ENCODE measurements at regions of chr3 and their contacts with region 1.

Region 1: DNA sequence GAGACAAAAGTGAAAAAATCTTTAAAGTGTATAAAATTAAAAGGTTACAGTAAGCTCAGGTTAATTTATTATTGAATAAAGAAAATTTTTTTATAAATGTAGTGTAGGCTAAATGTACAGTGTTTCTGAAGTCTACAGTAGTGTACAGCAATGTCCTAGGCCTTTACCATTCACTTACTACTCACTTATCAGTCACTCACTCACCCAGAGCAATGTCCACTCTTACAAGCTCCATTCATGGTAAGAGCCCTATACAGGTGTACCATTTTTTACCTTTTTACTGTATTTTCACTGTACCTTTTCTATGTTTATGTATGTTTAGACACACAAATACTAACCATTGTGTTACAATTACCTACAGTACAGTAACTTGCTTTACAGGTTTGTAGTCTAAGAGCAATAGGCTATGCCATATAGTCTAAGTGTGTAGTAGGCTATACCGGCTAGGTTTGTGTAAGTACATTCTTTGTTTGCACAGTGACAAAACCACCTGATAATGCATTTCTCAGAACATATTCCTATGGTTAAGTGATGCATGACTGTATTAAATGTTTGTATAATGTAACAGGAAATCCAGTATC is 38.1 kb upstream of the NECTIN3 start:
- H3K4me3 Mint-ChIP-seq: no peak overlapping the region
- H3K27ac Mint-ChIP-seq: no peak overlapping the region
- H3K4me1 Mint-ChIP-seq: no peaks in the 10 kb centered on the region
- H3K27me3 Mint-ChIP-seq: no peaks in the 10 kb centered on the region

Region 2: GRCh38 chr3:110362751-110363150 is 670.8 kb before region 1 on chr3:
- intact Hi-C with region 1: no loop called
- H3K4me3 Mint-ChIP-seq: no peak overlapping the region
- H3K27ac Mint-ChIP-seq: no peak overlapping the region
- H3K4me1 Mint-ChIP-seq: peaks cover 6% of the 10 kb centered on the region
- H3K27me3 Mint-ChIP-seq: no peaks in the 10 kb centered on the region

Region 3: DNA sequence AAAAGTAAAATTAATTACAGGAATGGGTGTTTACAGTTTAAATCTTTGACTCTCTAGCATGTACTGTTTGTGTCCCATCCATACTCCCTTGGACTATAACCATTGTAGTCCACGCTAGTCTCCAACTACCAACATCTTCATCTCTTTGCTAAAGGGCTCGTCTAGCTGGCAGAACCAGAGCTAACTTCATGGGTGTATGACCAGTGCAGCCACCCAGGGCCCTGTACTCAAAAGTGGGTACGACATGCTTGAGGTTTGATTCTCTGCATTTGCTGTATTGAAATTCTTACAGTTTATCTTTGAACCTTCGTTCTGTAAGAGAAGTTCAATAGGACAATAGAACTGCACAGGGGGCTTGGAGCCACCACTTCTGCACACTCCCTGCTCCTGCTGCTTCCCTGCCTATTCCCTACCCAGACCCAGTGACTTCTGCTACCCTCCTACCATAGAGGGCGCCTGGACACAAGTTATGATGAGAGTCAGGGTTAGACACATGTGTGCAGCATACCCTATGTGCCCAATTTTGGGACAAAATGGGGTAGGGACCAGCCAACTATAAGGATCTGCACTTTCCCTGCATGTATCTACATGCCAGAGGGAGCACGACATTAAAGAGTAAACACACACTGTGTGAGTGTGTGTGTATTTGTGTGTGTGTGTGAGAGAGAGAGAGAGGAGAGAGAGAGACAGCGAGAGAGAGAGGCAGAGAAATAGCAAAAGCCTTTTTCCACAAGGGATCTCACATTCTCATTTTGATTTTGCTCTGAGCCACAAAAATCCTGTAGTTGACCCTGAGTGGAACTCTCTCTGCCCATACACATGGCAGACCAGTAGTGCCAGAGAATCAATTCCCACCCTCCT is 20.9 kb before region 1 on chr3:
- intact Hi-C with region 1: loop called (anchors 1 kb)
- H3K4me3 Mint-ChIP-seq: no peak overlapping the region
- H3K27ac Mint-ChIP-seq: no peak overlapping the region
- H3K4me1 Mint-ChIP-seq: no peaks in the 10 kb centered on the region
- H3K27me3 Mint-ChIP-seq: no peaks in the 10 kb centered on the region